ENCODE measurements at regions of chr20 and their contacts with region 1.

Region 1: GRCh38 chr20:4720041-4720976 is 1.4 kb upstream of the PRND start:
- DNase-seq: peak; percentile 80
- ATAC-seq: peak; percentile 87 to 93

Region 2: GRCh38 chr20:4607287-4607713 is 113.0 kb before region 1 on chr20:
- intact Hi-C with region 1: loop called (anchors 1 to 2 kb)
- DNase-seq: no peak
- ATAC-seq: peak; percentile 75

Region 3: DNA sequence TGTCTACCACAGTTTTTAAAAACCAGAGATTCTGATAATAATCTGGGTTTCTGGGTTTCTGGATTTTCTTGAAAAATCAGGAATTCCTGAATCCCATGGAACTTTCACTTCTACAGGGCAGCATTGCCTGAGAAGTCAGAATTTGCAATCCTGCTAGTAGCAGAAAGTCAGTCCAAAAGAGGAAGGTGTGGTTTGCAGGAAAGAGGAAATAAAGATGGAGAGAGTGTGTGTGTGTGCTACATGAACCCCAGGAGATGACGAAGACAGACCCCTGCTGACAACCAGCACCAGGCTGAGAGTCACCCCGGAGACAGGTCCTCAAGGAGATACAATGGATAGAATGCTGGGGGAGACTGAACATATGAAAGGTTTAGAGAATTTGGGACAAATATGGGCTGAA is 46.3 kb after region 1 on chr20:
- intact Hi-C with region 1: no loop called
- DNase-seq: no peak
- ATAC-seq: peak; percentile 55 to 71

Region 4: GRCh38 chr20:5580936-5581708 is 860.8 kb after region 1 on chr20:
- intact Hi-C with region 1: no loop called
- DNase-seq: no peak
- ATAC-seq: no peak

Measured in left cardiac atrium (tissue), 4 donors.